ENCODE measurements at regions of chr3 and their contacts with region 1.

Region 1: DNA sequence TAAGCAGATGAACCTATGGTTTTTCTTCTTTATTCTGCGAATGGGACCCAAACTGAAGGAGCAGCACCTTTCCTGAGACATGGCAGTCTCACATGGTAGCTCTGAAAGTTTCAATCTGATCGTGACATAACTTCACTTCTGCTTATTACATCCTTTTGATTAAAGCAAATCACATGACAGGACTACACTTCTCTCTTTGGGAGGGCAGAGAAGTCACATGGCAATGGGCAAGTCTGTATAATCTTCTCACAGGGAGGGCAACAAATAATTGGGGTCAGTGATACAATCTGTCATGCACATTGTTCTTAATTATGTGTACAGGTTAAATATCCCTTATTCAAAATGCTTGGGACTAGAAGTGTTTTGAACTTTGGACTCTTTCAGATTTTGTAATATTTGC is 21.6 kb downstream of the NCBP2 start:
- H3K4me3 Mint-ChIP-seq: no peak overlapping the region
- H3K27ac Mint-ChIP-seq: peak overlapping the region; percentile 60
- H3K4me1 Mint-ChIP-seq: peaks cover 25% of the 10 kb centered on the region
- H3K27me3 Mint-ChIP-seq: no peaks in the 10 kb centered on the region

Region 2: DNA sequence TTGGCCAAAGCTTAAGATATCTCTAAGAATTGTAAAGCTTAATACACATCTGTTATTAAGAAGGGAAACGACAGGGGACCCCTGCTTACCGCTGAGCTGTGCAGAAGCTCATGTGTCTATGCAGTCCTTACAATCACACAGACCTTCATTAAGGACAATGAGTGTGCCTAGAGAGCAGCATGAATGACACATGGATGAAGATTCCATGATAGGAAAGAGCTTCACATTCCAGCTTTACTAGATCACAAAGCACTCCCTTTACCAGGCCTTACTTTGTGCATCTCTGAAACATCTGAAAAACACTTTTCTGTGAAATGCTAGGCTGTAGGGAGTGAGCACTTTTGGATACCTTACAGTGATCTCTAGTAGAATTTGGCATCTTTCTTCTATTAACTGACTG is 449.2 kb before region 1 on chr3:
- intact Hi-C with region 1: no loop called
- H3K4me3 Mint-ChIP-seq: no peak overlapping the region
- H3K27ac Mint-ChIP-seq: no peak overlapping the region
- H3K4me1 Mint-ChIP-seq: no peaks in the 10 kb centered on the region
- H3K27me3 Mint-ChIP-seq: no peaks in the 10 kb centered on the region

Region 3: GRCh38 chr3:196948442-196949284 is 27.9 kb after region 1 on chr3:
- intact Hi-C with region 1: no loop called
- H3K4me3 Mint-ChIP-seq: no peak overlapping the region
- H3K27ac Mint-ChIP-seq: no peak overlapping the region
- H3K4me1 Mint-ChIP-seq: peaks cover 22% of the 10 kb centered on the region
- H3K27me3 Mint-ChIP-seq: no peaks in the 10 kb centered on the region

Region 4: GRCh38 chr3:197811343-197811742 is 890.6 kb after region 1 on chr3:
- intact Hi-C with region 1: loop called (anchors 10 kb)
- H3K4me3 Mint-ChIP-seq: no peak overlapping the region
- H3K27ac Mint-ChIP-seq: no peak overlapping the region
- H3K4me1 Mint-ChIP-seq: peaks cover 27% of the 10 kb centered on the region
- H3K27me3 Mint-ChIP-seq: no peaks in the 10 kb centered on the region

Measured in dendritic cell treated with granulocyte-macrophage colony-stimulating factor and Interleukin-4, amounts not matched to agents 40 ng/mL and 50 ng/mL, for 4 days (primary cell).